ENCODE measurements at regions of chr16 and their contacts with region 1.

Region 1: DNA sequence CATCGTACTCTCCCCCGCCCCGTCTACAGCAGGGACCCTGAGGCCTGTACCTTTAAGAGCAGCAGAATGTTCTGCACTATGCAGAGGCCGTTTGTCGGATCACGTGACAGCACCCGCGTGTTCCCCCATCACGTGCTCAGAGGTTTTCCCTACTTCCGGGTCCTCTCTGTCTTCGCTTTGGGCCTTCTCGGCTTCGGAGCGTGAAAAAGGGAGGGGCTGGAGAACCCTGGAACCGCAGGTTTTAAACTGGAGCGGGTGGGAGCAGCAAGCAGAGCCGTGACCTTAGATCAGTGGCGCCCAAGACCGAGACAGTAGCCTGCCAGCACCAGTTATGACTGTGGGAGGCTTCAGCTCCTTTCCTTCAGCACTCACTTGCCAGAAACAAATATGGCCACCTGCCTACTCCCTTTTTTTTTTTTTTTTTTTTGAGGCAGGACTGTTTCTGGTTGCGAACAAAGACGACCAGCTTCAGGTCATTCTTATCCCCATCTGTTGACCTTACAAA is at the start of gene CLN3:
- DNase-seq: peak; percentile 94
- H3K4me3 ChIP-seq: peak within 1 kb of the TSS; percentile 61 to 100 (median 86)
- H3K27ac ChIP-seq: peak within 1 kb of the TSS; percentile 89 to 98 (median 95)
- H3K4me1 ChIP-seq: peaks cover 5 to 70% (median 37%) of the 10 kb centered on the region in 4 donors
- H3K27me3 ChIP-seq: no peaks in the 10 kb centered on the region
- CTCF ChIP-seq: no peak
- EP300 ChIP-seq: no peak
- POLR2A ChIP-seq: peak; percentile 53
- total RNA-seq, gene CLN3: 80.2 to 294 (median 154) TPM

Region 2: GRCh38 chr16:28538733-28539596 is 46.9 kb after region 1 on chr16 and contains the start of gene NUPR1:
- in situ Hi-C with region 1: loop called in 1 of 4 experiments (anchors 10 kb)
- intact Hi-C with region 1: loop called (anchors 1 kb)
- DNase-seq: peak; percentile 94
- H3K4me3 ChIP-seq: peak within 1 kb of the TSS; percentile 38 to 61 (median 50)
- H3K27ac ChIP-seq: peak within 1 kb of the TSS; percentile 91 to 95 (median 94)
- H3K4me1 ChIP-seq: peaks cover 0 to 75% (median 40%) of the 10 kb centered on the region in 4 donors
- H3K27me3 ChIP-seq: no peaks in the 10 kb centered on the region
- CTCF ChIP-seq: no peak
- EP300 ChIP-seq: peak; percentile 69
- POLR2A ChIP-seq: peak; percentile 90
- total RNA-seq, gene NUPR1: 15.3 to 85.6 (median 23.6) TPM